ENCODE measurements at regions of chr17 and their contacts with region 1.

Region 1: GRCh38 chr17:19362277-19363113 is at the start of gene B9D1:
- DNase-seq: peak; percentile 83
- H3K4me3 Mint-ChIP-seq: peak within 1 kb of the TSS; percentile 70
- H3K27ac Mint-ChIP-seq: peak within 1 kb of the TSS; percentile 60
- H3K4me1 Mint-ChIP-seq: peaks cover 9% of the 10 kb centered on the region
- H3K27me3 Mint-ChIP-seq: no peaks in the 10 kb centered on the region
- CTCF ChIP-seq: peak; percentile 74
- total RNA-seq, gene B9D1: 14.1 and 15.6 TPM in 2 replicates

Region 2: GRCh38 chr17:19447085-19447583 is 84.6 kb after region 1 on chr17:
- CTCF ChIA-PET with region 1: interaction called, 30 read pairs
- intact Hi-C with region 1: loop called (anchors 1 kb)
- DNase-seq: peak; percentile 69
- H3K4me3 Mint-ChIP-seq: no peak overlapping the region
- H3K27ac Mint-ChIP-seq: no peak overlapping the region
- H3K4me1 Mint-ChIP-seq: peaks cover 13% of the 10 kb centered on the region
- H3K27me3 Mint-ChIP-seq: peaks cover 13% of the 10 kb centered on the region
- CTCF ChIP-seq: peak; percentile 75